Endothelial cell of umbilical vein (primary cell): ENCODE measurements at regions of chr7 and their contacts with region 1.

Region 1: DNA sequence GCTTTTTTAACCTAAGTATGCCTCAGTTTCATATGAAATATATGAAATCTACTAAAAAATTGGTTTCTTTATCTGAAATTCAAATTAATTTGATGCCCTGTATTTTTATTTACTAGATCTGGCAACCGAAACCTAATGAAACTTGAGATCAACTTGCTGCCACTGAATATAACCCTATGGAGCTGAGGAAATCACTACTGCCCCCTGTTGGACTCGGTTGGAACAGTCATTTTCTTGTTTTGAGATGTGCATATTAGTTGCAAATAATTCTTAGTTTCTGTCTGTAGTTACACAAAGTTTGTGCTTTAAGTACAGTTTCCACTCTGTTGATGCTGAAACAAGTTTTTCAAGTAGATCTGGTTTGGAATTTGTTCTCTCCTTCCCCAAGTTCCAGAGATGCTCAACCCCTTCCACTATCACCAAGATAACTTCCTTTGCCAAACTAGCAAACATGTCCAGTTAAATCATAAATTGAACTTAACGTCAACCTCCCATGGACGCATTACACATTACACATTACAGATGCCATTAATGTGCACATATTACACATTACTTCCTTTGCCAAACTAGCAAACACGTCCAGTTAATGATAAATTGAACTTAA is 22.2 kb upstream of the EXOC4 start:
- DNase-seq: peak; percentile 73
- H3K4me3 ChIP-seq: no peak overlapping the region
- H3K27ac ChIP-seq: no peak overlapping the region
- H3K4me1 ChIP-seq: peaks cover 9% of the 10 kb centered on the region
- H3K27me3 ChIP-seq: peaks cover 21 to 36% of the 10 kb centered on the region in 2 experiments
- CTCF ChIP-seq: peak; percentile 60 to 62
- POLR2A ChIP-seq: no peak

Region 2: DNA sequence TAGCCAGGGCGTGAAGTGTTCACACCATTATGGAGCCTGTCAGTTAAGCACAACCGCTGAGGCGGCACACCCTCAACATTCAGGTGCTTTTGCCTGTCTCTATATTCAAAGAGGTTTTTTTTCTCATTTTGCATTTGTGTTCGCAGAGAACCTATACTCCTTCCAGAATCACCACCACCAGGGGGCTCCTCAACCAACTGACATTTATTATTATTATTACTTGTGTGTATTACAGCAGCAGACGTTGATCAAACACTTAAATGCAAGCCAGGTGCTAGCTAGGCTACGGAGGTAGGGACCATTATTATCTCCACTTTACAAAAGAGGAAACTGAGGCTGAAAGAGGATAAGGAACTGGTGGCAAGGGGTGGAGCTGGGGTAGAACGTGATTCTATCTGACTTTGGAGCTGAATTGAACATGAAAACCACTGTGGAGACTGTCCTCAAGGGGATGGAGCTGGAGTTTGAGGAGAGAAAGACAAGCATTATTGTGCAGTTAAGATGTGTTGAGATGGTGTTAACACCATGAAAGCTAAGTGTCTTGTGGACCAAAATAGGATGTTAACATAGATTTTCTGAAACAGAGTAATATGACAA is 520.6 kb before region 1 on chr7:
- CTCF ChIA-PET with region 1: interaction called, 7 read pairs
- POLR2A ChIA-PET with region 1: no interaction called
- dilution Hi-C with region 1: no loop called
- intact Hi-C with region 1: loop called (anchors 1 kb)
- DNase-seq: peak; percentile 59
- H3K4me3 ChIP-seq: no peak overlapping the region
- H3K27ac ChIP-seq: no peak overlapping the region
- H3K4me1 ChIP-seq: no peaks in the 10 kb centered on the region
- H3K27me3 ChIP-seq: peaks cover 0 to 2% of the 10 kb centered on the region in 2 experiments
- CTCF ChIP-seq: peak; percentile 53
- POLR2A ChIP-seq: no peak

Region 3: GRCh38 chr7:133252858-133253518 is 22.3 kb after region 1 on chr7 and contains the start of gene EXOC4:
- CTCF ChIA-PET with region 1: interaction called, 3 read pairs
- POLR2A ChIA-PET with region 1: no interaction called
- dilution Hi-C with region 1: no loop called
- intact Hi-C with region 1: loop called (anchors 1 kb)
- DNase-seq: peak; percentile 99
- H3K4me3 ChIP-seq: peak within 1 kb of the TSS; percentile 88 to 95 (median 94)
- H3K27ac ChIP-seq: peak within 1 kb of the TSS; percentile 57
- H3K4me1 ChIP-seq: peaks cover 10% of the 10 kb centered on the region
- H3K27me3 ChIP-seq: no peaks in the 10 kb centered on the region
- CTCF ChIP-seq: no peak
- POLR2A ChIP-seq: peak; percentile 83
- total RNA-seq, gene EXOC4: 69.6 and 73.1 TPM in 2 replicates

Region 4: GRCh38 chr7:133310232-133310862 is 79.7 kb after region 1 on chr7:
- CTCF ChIA-PET with region 1: no interaction called
- POLR2A ChIA-PET with region 1: no interaction called
- dilution Hi-C with region 1: no loop called
- intact Hi-C with region 1: loop called (anchors 5 kb)
- DNase-seq: peak; percentile 90
- H3K4me3 ChIP-seq: no peak overlapping the region
- H3K27ac ChIP-seq: no peak overlapping the region
- H3K4me1 ChIP-seq: peaks cover 10% of the 10 kb centered on the region
- H3K27me3 ChIP-seq: no peaks in the 10 kb centered on the region
- CTCF ChIP-seq: no peak
- POLR2A ChIP-seq: no peak